Activated CD4-positive, alpha-beta memory T cell treated with anti-CD3 and anti-CD28 coated beads, Interleukin-2, amount 10 ng/mL, durations not matched to agents 7 days and 5 days (primary cell): ENCODE measurements at regions of chr6 and their contacts with region 1.

Region 1: DNA sequence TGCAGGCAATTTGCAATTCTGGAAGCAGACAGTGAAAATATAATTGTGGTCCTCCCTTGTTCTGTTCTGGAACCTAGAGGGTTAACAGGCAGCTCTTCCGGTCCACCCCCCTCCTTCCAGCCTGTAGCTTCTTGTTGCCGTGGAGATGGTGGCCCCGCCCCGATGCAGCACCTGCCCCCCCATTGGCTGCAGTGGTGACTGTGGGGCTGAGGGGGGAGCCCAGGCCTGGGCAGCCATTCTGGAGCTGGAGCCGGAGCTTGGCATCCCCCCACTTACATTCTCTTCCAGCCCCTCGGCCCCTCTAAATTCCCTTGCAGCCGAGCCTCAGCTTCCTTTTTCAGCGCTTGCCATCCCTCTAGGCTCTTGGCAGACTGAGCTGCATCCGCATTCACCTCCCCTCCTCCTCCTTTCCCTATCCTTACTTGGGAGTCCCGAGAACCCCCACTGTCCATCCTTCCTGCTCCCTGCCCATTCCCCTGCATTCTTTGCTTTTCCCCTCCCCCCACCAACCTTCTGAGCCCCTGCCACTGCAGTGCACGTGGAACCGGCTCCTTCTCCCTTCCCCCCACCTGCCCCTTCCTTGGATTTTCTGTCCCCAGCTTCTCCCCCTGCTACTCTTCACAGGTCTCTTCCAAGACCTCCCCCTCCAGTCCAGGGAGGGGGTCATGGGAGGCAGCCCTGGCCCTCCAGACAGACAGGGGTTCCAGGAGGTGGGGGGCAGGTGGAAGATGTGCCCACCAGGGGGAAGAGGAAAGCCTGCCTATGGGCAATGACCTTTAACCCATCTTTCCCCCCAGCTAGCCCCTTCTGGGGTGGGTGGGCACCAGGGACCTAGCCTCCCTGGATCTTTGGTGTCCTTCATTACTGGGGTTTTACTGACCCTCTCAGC is 11.4 kb downstream of the SYNGAP1 start:
- DNase-seq: peak; percentile 86
- H3K4me3 Mint-ChIP-seq: peak overlapping the region; percentile 84
- H3K27ac Mint-ChIP-seq: peak overlapping the region; percentile 90
- H3K4me1 Mint-ChIP-seq: peaks cover 65% of the 10 kb centered on the region
- H3K27me3 Mint-ChIP-seq: no peaks in the 10 kb centered on the region

Region 2: DNA sequence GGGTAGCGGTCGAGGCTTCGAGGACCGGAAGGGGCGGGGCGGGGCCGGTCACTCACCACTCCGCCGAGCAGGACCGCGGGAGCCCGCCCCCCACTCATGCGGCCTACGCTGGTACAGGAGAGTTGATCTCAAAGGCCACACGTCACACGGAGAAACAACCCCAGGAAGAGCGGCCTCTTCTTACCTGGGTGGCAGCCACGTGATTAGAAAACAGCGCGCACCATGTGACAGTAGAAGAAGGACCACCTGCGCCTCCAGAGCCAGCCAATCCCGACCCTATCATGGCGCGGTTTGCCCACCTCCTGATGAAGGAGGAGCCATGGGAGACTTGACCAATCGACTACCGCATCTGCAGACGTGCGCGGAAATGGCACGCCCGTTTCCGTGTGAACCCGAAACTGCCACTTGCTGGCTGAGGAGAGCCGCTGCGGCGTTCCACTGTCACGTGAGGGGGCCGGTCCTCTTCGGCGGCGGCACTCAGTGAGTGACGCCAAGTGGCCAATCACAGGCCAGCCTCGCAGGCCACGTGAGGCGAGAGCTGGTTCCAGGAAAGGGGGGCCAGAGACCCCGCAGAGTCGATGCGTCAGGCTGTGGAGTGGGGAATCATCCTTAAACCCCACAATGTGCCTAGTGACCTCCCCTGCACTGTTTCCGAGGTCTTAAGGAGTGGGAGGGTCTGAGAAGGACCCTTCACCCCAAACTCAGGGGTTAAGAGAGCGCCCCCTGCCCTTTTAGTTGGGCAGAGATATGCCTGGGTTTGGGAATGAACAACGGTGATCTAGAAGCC is 13.1 kb before region 1 on chr6 and contains the start of gene CUTA:
- CTCF ChIA-PET with region 1: interaction called, 14 read pairs
- POLR2A ChIA-PET with region 1: interaction called, 32 read pairs
- DNase-seq: peak; percentile 99
- H3K4me3 Mint-ChIP-seq: peak within 1 kb of the TSS; percentile 92
- H3K27ac Mint-ChIP-seq: peak within 1 kb of the TSS; percentile 98
- H3K4me1 Mint-ChIP-seq: peaks cover 67% of the 10 kb centered on the region
- H3K27me3 Mint-ChIP-seq: peaks cover 15% of the 10 kb centered on the region
- total RNA-seq, gene CUTA: 243 TPM